RWPE1 (cell line): ENCODE measurements at regions of chr3 and their contacts with region 1.

Region 1: DNA sequence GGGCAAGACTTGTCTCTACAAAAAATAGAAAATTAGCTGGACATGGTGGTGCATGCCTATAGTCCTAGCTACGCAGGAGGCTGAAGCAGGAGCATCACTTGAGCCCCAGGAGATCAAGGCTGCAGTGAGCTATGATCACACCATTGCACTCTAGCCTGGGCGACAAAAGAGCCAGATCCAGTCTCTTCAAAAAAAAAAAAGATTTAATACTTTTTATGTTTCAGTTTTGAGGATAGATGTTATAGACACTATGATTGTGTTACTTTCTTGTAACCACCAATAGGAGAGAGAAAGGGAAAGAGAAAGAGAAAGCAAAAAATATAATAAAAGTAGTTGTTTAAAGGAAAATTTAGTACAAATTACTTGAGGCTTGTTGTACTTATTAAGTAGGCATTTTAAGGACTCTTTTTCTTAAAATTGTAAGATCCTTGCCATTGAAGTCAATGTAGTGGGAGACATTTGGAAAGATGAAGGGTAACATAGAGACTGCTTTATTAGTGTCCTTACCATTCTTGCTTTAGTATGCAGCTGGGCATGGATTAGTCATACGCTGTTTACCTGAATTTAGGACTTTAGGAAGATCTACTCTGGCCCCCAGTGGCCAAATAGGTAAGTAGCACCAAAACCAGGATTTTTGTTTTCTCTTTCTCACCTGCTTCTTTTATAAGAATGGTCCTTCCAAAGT is 35.1 kb upstream of the ZDHHC23 start:
- DNase-seq: peak; percentile 74
- H3K27ac ChIP-seq: no peak overlapping the region
- CTCF ChIP-seq: peak; percentile 76

Region 2: DNA sequence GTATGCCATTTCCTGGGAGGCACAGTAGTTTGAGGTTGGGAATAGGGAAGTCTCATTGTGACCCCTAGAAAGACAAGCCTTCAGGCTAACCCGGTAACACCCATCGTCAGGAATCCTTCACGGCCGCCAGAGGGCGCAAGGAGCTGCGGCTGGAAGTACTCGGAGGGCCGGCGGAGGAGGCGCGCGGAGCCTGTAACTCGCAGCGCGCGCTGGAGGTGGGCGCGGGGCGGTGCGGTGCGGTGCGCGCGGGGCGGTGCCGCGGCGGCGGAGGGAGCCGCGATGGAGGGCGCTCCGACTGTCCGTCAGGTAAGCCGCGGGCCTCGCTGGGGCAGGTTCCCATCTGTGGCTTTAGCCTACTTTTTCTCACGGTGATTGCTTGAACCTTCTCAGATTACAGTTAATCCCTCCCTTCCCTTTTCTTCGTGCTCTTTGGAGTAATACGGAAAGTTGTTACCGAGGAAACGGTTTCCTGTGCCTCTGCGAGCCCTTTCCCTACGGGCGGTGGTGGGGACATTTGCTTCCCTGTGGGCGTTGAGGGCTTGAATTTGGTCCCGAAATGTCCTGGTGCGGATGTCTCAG is 74.0 kb before region 1 on chr3 and contains the start of gene GRAMD1C:
- CTCF ChIA-PET with region 1: interaction called, 12 read pairs
- POLR2A ChIA-PET with region 1: no interaction called
- DNase-seq: peak; percentile 79
- H3K27ac ChIP-seq: peak within 1 kb of the TSS; percentile 74
- CTCF ChIP-seq: peak; percentile 91

Region 3: DNA sequence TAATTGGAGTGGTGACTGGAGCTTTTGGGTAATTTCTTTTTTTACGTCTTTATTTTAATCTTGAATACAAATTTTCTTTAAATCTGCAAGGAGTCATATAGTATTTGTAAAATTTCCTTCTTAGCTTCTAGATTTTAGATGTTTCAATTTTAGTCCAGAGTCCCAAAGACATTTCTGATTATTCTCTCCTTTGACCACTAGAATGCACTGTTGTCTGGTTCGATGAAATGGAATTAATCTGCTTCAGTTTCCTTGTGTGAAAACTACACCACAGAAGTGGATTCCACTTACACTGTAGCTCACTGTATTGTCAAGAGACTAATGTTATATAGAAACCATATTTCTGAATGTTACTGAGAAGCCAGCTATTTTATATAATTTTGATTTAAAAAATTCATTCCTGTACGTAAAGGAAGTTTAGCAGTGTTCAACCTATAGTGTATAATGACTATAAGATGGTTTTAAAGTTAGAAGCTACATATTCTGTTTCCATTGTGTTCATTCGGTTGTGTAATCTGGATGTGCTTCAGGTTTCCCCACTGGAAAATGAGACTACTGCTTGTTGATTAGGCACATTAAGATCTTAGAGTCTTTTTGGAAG is 68.0 kb before region 1 on chr3:
- CTCF ChIA-PET with region 1: interaction called, 38 read pairs
- POLR2A ChIA-PET with region 1: no interaction called
- DNase-seq: peak; percentile 37
- H3K27ac ChIP-seq: no peak overlapping the region
- CTCF ChIP-seq: peak; percentile 70